Sigmoid colon (tissue), 7 donors: ENCODE measurements at regions of chr12 and their contacts with region 1.

Region 1: GRCh38 chr12:57005980-57006808 is at the start of gene ZBTB39:
- DNase-seq: peak; percentile 72
- H3K4me3 ChIP-seq: peak within 1 kb of the TSS; percentile 91 to 98 (median 94)
- H3K27ac ChIP-seq: peak within 1 kb of the TSS; percentile 81 to 94 (median 92)
- H3K4me1 ChIP-seq: peaks cover 0 to 54% (median 41%) of the 10 kb centered on the region in 4 donors
- H3K27me3 ChIP-seq: no peaks in the 10 kb centered on the region
- CTCF ChIP-seq: peak in 3 of 4 experiments; percentile 20 to 39 (median 29)
- EP300 ChIP-seq: no peak
- POLR2A ChIP-seq: no peak
- total RNA-seq, gene ZBTB39: 5.0 to 6.4 (median 5.6) TPM

Region 2: GRCh38 chr12:56645717-56646446 is 360.3 kb before region 1 on chr12 and contains the start of gene ATP5F1B:
- intact Hi-C with region 1: loop called (anchors 10 kb)
- DNase-seq: peak; percentile 99
- H3K4me3 ChIP-seq: peak within 1 kb of the TSS; percentile 57 to 96 (median 94)
- H3K27ac ChIP-seq: peak within 1 kb of the TSS; percentile 88 to 99 (median 96)
- H3K4me1 ChIP-seq: peaks cover 0 to 41% (median 33%) of the 10 kb centered on the region in 4 donors
- H3K27me3 ChIP-seq: no peaks in the 10 kb centered on the region
- CTCF ChIP-seq: no peak
- EP300 ChIP-seq: no peak
- POLR2A ChIP-seq: peak; percentile 99
- total RNA-seq, gene ATP5F1B: 414 to 487 (median 449) TPM

Region 3: DNA sequence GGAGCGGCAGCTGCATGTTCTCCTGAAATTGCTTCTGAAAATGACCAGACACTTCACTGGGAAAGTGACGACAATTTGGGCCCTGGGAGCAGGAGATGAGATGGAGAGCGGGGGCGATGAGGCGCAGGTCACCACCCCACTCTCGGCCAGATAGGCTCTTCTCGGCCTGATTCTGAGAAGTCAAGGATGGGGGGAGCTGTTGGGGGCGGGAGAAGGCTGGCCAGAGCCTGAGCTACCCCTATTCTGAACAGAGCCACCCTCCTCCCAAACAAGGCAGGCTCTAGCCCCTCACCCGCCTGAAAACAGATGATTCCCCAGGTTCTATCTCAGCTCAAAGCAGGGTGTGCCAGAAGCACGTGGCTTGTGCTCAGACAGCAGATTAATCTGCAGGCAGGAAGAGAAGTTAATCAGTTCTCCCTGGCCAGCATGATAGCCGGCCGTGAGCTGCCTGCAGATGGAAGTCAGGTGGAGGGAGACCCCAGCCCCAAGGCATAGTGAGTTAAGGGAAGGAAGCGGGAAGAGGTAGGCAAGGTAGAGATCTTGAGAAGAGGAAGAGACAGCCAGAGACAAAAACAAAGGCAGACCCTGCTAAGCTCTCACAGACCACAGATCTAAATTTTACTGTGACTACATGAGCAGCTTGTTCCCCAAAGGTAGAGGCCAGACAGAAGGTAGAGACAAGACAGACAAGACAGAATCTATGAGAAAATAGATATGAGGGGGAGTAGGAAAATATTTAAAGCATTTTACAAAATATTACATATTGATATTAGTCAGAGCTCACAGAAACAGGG is 21.0 kb after region 1 on chr12:
- intact Hi-C with region 1: no loop called
- DNase-seq: no peak
- H3K4me3 ChIP-seq: no peak overlapping the region
- H3K27ac ChIP-seq: peak overlapping the region in 3 of 4 donors; percentile 23 to 59 (median 54)
- H3K4me1 ChIP-seq: peaks cover 0 to 54% (median 38%) of the 10 kb centered on the region in 4 donors
- H3K27me3 ChIP-seq: no peaks in the 10 kb centered on the region
- CTCF ChIP-seq: no peak
- EP300 ChIP-seq: no peak
- POLR2A ChIP-seq: no peak

Region 4: DNA sequence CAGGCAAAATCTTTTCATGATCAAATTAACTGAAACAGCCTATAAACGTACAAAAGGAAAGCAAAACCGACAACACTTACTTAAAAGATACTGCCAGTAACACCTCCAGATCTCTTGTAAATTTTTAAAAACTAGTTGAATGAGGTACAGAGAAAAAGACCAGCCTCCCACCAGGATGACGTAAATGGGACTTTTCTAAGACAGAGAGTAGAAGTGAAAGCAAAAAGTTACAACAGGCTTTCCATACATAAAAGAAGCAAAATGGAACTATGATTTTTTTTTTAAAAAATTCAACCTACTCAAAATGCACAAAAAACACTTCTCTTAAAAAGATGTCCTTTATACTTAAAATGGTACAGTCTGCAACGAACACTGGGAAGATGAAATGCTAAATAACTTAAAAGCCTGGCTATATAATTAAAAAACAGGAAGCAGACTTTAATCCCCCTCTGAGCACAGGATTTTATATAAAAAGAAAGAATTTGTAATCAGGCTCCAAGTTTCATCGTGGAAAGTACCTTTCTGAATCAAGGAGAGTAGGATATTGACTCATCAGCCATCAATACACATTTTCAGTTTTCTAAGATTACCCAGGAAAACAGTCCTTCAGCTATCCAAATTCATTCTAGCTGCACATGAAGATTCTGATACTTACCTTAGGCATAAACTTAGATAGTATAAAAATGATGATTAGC is 57.9 kb after region 1 on chr12:
- intact Hi-C with region 1: loop called (anchors 2 kb)
- DNase-seq: no peak
- H3K4me3 ChIP-seq: no peak overlapping the region
- H3K27ac ChIP-seq: peak overlapping the region in 1 of 4 donors; percentile 35
- H3K4me1 ChIP-seq: peaks cover 0 to 2% (median 0%) of the 10 kb centered on the region in 4 donors
- H3K27me3 ChIP-seq: no peaks in the 10 kb centered on the region
- CTCF ChIP-seq: no peak
- EP300 ChIP-seq: no peak
- POLR2A ChIP-seq: no peak

Region 5: DNA sequence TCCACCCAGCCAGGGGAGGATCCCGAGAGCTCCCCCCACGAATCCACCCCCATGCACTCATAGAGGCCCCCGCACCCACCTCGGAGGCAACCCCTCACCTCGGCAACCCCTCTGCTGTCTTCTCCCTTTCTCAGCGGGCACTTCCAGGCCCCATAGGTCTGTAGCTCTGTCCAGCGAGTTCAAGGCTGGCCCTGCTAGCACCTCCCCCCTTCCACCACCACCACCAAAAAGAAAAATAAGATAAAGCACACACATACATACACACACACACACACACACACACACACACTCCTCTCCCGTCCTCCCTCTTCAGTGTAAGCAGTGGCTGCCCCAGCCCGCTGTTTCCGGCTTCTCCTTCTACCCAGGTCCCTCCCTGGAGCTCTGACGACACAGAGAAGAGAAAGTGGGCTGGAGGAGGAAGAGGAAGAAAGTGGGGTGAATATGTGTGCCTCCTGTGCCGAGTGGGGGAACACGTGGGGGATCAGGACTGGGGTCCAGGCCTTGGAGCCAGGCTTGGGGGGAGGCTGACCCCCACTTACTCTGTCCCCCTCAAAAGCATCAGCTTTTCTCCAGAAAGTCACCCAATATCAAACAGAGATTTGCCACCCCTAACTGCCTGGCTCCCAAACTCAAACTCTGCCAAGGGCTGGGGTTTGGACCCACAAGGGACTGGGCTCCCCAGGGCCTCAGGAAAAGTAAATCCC is 105.0 kb after region 1 on chr12 and contains the start of gene STAT6:
- intact Hi-C with region 1: loop called (anchors 5 kb)
- DNase-seq: peak; percentile 94
- H3K4me3 ChIP-seq: peak within 1 kb of the TSS; percentile 59 to 83 (median 68)
- H3K27ac ChIP-seq: peak within 1 kb of the TSS; percentile 94 to 99 (median 98)
- H3K4me1 ChIP-seq: peaks cover 0 to 52% (median 47%) of the 10 kb centered on the region in 4 donors
- H3K27me3 ChIP-seq: no peaks in the 10 kb centered on the region
- CTCF ChIP-seq: peak in 1 of 4 experiments; percentile 15
- EP300 ChIP-seq: no peak
- POLR2A ChIP-seq: peak; percentile 62 to 70
- total RNA-seq, gene STAT6: 105 to 163 (median 113) TPM

Region 6: GRCh38 chr12:57175428-57176138 is 169.4 kb after region 1 on chr12:
- intact Hi-C with region 1: loop called (anchors 5 kb)
- DNase-seq: peak; percentile 95
- H3K4me3 ChIP-seq: no peak overlapping the region
- H3K27ac ChIP-seq: peak overlapping the region; percentile 20 to 64 (median 38)
- H3K4me1 ChIP-seq: peaks cover 0 to 32% (median 16%) of the 10 kb centered on the region in 4 donors
- H3K27me3 ChIP-seq: no peaks in the 10 kb centered on the region
- CTCF ChIP-seq: peak; percentile 82 to 90 (median 85)
- EP300 ChIP-seq: no peak
- POLR2A ChIP-seq: no peak